Activated CD4-positive, alpha-beta T cell treated with anti-CD3 and anti-CD28 coated beads for 36 hours (primary cell): ENCODE measurements at regions of chr19 and their contacts with region 1.

Region 1: GRCh38 chr19:17025991-17026658 is 485 bp downstream of the CPAMD8 start:
- DNase-seq: no peak
- ATAC-seq: no peak
- H3K4me3 Mint-ChIP-seq: no peak overlapping the region
- H3K27ac Mint-ChIP-seq: no peak overlapping the region
- H3K4me1 Mint-ChIP-seq: peaks cover 3% of the 10 kb centered on the region
- H3K27me3 Mint-ChIP-seq: peaks cover 42% of the 10 kb centered on the region

Region 2: GRCh38 chr19:16561382-16561781 is 464.7 kb before region 1 on chr19:
- CTCF ChIA-PET with region 1: no interaction called
- POLR2A ChIA-PET with region 1: interaction called, 10 read pairs
- intact Hi-C with region 1: no loop called
- DNase-seq: no peak
- ATAC-seq: no peak
- H3K4me3 Mint-ChIP-seq: no peak overlapping the region
- H3K27ac Mint-ChIP-seq: no peak overlapping the region
- H3K4me1 Mint-ChIP-seq: peaks cover 12% of the 10 kb centered on the region
- H3K27me3 Mint-ChIP-seq: no peaks in the 10 kb centered on the region

Region 3: GRCh38 chr19:17041976-17042375 is 15.9 kb after region 1 on chr19:
- CTCF ChIA-PET with region 1: no interaction called
- POLR2A ChIA-PET with region 1: no interaction called
- intact Hi-C with region 1: no loop called
- DNase-seq: no peak
- ATAC-seq: no peak
- H3K4me3 Mint-ChIP-seq: no peak overlapping the region
- H3K27ac Mint-ChIP-seq: no peak overlapping the region
- H3K4me1 Mint-ChIP-seq: no peaks in the 10 kb centered on the region
- H3K27me3 Mint-ChIP-seq: peaks cover 6% of the 10 kb centered on the region